ENCODE measurements at regions of chr4 and their contacts with region 1.

Region 1: GRCh38 chr4:127993151-127993550 is 27.9 kb downstream of the ABHD18 start:
- DNase-seq: no peak
- ATAC-seq: no peak
- H3K4me3 ChIP-seq: no peak overlapping the region
- H3K27ac ChIP-seq: peak overlapping the region in 1 of 10 donors; percentile 39
- H3K4me1 ChIP-seq: peaks cover 0 to 11% (median 0%) of the 10 kb centered on the region in 9 donors
- H3K27me3 ChIP-seq: no peaks in the 10 kb centered on the region
- CTCF ChIP-seq: no peak

Region 2: GRCh38 chr4:128025319-128025718 is 32.2 kb after region 1 on chr4:
- intact Hi-C with region 1: loop called in 1 of 10 experiments (anchors 1 kb)
- DNase-seq: no peak
- ATAC-seq: no peak
- H3K4me3 ChIP-seq: no peak overlapping the region
- H3K27ac ChIP-seq: no peak overlapping the region
- H3K4me1 ChIP-seq: no peaks in the 10 kb centered on the region
- H3K27me3 ChIP-seq: no peaks in the 10 kb centered on the region
- CTCF ChIP-seq: no peak